ENCODE measurements at regions of chr5 and their contacts with region 1.

Region 1: GRCh38 chr5:55593115-55593472 is 58.3 kb upstream of the PLPP1 start:
- DNase-seq: no peak
- H3K4me3 Mint-ChIP-seq: no peak overlapping the region
- H3K27ac Mint-ChIP-seq: peak overlapping the region; percentile 38
- H3K4me1 Mint-ChIP-seq: peaks cover 45% of the 10 kb centered on the region
- H3K27me3 Mint-ChIP-seq: no peaks in the 10 kb centered on the region

Region 2: GRCh38 chr5:55608595-55609349 is 15.7 kb after region 1 on chr5:
- intact Hi-C with region 1: loop called (anchors 1 kb)
- DNase-seq: peak; percentile 48
- H3K4me3 Mint-ChIP-seq: no peak overlapping the region
- H3K27ac Mint-ChIP-seq: peak overlapping the region; percentile 69
- H3K4me1 Mint-ChIP-seq: peaks cover 18% of the 10 kb centered on the region
- H3K27me3 Mint-ChIP-seq: no peaks in the 10 kb centered on the region

Region 3: DNA sequence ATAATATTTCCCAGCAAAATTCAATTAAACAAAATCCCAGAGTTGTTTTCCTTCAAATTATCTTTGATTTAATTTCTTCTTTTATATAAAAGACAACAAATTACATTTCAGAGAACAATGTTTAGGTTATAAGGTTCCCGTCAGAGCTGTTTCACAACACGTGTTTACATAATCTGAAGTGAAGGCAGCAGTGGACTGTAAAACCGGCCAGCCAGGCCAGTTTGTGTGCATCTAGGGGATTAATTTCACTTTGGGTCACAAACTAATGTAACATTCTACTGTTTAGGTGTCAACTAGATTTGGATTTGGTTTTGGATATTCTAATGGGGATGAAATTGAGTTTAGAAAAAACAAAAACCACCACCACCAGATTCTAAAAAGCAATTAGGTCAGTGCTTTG is 28.1 kb after region 1 on chr5:
- intact Hi-C with region 1: no loop called
- DNase-seq: no peak
- H3K4me3 Mint-ChIP-seq: no peak overlapping the region
- H3K27ac Mint-ChIP-seq: no peak overlapping the region
- H3K4me1 Mint-ChIP-seq: peaks cover 11% of the 10 kb centered on the region
- H3K27me3 Mint-ChIP-seq: no peaks in the 10 kb centered on the region